ENCODE measurements at regions of chr6 and their contacts with region 1.

Region 1: DNA sequence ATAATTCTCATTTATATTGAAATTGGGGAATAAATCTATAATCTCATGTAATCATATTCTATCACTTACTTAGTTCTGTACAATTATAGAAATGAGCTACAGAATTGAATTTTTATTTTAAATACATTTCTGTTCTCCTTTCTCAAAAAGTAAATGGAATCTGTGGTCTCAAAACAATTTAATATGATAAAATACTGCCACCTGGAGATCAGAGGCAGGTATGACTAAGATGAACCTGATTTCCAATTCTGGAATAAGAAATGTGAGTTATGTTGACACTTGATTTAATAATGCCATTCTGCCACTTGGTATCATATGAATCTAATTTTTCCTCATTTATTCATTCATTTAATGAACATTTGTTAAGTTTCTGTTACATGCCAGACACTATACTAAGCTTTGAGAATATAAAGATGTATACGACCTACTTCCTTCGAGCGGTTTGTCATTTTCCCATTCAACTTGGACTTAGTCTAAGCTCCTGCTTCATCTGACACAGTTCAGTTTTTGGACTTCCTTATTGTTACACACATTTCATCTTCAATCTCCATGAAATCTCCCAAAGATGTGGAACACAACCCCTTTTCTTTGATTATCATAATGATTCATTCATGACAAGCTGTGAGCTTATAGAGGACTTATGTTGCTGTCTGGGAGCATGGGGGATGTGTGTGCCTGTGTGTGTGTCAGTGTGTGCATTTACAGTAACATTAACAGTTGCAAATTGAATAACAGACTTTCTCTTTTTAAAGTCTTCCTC is 7.5 kb upstream of the CCDC28A start:
- DNase-seq: no peak
- H3K4me3 ChIP-seq: no peak overlapping the region
- H3K27ac ChIP-seq: no peak overlapping the region
- H3K4me1 ChIP-seq: no peaks in the 10 kb centered on the region
- H3K27me3 ChIP-seq: no peaks in the 10 kb centered on the region
- CTCF ChIP-seq: peak in 5 of 6 experiments; percentile 29 to 78 (median 68)
- POLR2A ChIP-seq: no peak

Region 2: DNA sequence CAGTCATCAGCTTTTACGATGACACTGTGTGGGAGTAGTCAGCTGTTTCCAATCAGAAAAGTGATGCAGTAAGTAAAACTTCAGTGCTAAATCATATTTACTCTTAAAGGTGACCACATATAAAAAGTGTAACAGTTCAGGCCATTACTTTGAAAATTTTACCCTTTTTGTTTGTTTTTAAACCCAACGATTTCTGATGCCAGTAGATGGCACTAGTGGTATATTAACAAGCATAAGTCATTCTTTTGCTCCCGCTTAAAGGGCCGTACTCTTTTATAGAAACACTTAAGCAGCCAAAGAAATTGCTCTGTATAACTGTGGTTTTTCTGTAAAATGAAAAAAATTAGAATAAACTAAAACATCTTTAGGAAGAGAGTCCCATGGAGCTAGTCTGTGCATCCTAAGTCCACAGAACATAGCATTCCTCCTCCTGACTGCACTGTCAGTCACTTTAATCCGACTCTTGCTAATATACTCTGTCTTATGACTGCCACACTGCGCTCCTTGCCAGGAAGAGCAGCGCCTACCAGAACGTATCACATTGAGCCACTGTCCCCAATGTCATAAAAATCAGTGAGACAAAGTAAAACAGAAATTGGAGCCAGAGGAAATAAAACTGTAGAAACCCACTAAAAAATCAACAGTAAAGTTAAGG is 337.0 kb before region 1 on chr6:
- intact Hi-C with region 1: loop called (anchors 10 kb)
- DNase-seq: no peak
- H3K4me3 ChIP-seq: no peak overlapping the region
- H3K27ac ChIP-seq: no peak overlapping the region
- H3K4me1 ChIP-seq: no peaks in the 10 kb centered on the region
- H3K27me3 ChIP-seq: no peaks in the 10 kb centered on the region
- CTCF ChIP-seq: peak in 5 of 6 experiments; percentile 42 to 82 (median 64)
- POLR2A ChIP-seq: no peak

Region 3: DNA sequence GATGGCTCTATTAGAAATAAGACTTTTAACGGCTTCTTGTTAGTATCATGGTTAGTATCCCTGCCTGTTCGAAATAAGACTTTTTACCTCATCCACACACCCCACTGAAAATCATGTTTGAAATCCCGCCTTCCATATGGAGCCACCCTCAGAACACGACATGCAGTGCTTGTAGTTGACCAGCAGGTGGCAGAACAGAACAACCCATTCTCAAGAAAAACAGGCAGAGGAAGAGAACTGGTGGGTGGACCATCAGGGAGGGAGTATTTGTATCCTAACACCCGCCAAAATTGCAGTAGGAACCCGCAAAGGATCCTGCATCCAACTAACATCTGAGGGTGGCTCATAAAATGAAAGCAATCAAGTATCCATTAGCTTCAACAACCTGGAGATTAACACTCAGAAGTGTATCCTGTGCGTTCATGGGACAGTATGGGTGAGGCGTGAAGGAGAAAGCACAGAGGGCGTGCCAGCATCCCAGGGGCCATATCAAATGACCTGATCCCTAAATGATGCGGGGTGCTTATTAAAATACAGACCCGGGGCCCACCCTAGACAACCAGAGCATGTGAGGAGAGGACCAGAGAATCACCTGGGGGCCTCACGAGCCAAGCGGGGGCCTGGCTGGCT is 177.2 kb before region 1 on chr6:
- intact Hi-C with region 1: loop called (anchors 5 kb)
- DNase-seq: peak; percentile 31 to 45
- H3K4me3 ChIP-seq: no peak overlapping the region
- H3K27ac ChIP-seq: no peak overlapping the region
- H3K4me1 ChIP-seq: peaks cover 0 to 3% of the 10 kb centered on the region in 2 donors
- H3K27me3 ChIP-seq: no peaks in the 10 kb centered on the region
- CTCF ChIP-seq: peak; percentile 77 to 91 (median 85)
- POLR2A ChIP-seq: no peak

Region 4: DNA sequence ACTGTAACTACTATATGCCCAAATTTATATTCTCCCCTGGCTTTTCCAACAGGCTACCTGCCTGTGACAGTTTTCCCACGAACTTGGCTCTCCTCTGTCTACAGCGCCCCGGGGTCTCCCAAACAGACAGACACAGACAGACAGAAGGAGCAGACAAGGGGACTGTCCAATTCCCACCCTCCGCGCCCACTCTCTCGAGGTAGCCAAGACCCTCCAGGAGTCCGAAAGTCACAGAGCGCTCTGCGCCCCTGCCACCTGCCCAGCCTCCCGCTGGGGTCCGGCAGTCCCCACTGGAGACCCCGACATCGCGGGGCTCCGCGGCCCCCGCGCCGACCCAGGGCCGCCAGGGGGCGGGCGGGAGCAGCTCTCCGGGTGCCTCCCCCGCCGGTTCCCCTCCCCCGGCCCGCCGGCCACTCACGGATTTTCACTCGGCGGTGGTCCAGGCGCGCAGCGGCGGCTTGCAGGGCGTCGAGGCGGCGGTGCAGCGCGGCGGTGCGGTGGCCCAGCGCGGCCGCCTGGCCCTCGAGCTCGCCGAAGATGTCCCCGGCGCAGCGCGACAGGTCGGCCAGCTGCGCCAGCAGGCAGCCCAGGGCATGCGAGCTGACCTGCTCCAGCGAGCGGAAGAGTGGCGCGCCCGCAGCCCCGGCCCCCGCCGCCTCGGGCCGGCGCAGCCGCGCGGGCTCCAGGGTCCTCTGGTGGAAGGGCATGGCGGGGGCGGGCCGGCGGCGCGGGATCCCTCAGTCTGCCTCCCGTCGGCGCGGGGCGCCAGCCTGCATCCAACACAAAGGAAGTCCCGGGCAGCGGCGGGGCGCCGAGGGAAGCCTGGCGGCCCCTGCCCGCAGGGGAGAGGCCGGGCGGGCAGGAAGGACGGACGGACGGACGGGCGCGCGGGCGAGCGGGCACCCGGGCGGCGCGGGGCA is 73.8 kb before region 1 on chr6:
- intact Hi-C with region 1: loop called (anchors 5 kb)
- DNase-seq: peak; percentile 73 to 79
- H3K4me3 ChIP-seq: peak overlapping the region; percentile 40 to 79 (median 73)
- H3K27ac ChIP-seq: peak overlapping the region; percentile 39 to 70 (median 70)
- H3K4me1 ChIP-seq: peaks cover 3 to 4% of the 10 kb centered on the region in 2 donors
- H3K27me3 ChIP-seq: no peaks in the 10 kb centered on the region
- CTCF ChIP-seq: peak; percentile 48 to 95 (median 78)
- POLR2A ChIP-seq: peak in 1 of 2 donors; percentile 24